ENCODE measurements at regions of chr1 and their contacts with region 1.

Region 1: DNA sequence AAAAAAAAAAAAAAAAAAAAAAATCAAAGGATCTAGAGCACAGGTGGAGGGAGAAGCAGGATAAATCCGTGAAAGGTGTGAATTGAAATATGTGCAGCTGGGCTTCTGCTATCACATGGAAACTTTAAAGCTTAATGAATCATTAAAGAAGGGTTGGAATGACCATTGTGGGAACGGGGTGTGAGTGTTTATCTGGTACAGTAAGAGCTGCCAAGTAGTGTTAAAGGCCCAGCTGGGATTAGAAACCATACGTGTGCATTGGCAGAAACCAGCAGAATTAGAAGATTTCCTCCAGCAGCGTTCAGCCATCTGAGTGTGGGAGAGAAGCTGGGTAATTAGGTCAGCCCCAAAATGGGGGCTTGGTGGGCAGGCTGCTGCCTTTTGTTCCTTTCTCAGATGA is 13.5 kb downstream of the FALEC start:
- DNase-seq: no peak
- H3K4me3 ChIP-seq: no peak overlapping the region
- CTCF ChIP-seq: no peak

Region 2: DNA sequence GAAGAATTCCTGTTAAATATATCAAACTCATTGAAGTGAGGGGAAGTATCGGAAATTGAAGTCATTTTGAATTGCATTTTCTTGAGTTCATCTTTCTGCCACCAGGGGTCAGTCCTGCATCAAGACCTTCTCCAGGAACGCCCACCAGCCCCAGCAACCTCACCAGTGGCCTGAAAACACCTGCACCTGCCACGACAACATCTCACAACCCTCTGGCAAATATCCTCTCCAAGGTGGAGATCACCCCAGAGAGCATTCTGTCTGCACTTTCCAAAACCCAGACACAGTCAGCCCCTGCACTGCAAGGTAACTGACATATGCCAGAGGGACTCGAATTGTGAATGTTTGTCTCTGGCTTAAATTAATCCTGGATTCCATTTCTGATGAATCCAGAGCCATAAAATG is 64.6 kb before region 1 on chr1:
- CTCF ChIA-PET with region 1: interaction called, 15 read pairs
- POLR2A ChIA-PET with region 1: no interaction called
- DNase-seq: no peak
- H3K4me3 ChIP-seq: no peak overlapping the region
- CTCF ChIP-seq: peak; percentile 71

Region 3: GRCh38 chr1:150486964-150487762 is 41.9 kb before region 1 on chr1 and contains the start of gene TARS2:
- CTCF ChIA-PET with region 1: interaction called, 28 read pairs
- POLR2A ChIA-PET with region 1: no interaction called
- DNase-seq: peak; percentile 91
- H3K4me3 ChIP-seq: peak within 1 kb of the TSS; percentile 86
- CTCF ChIP-seq: no peak

Region 4: GRCh38 chr1:150507905-150508854 is 20.8 kb before region 1 on chr1 and contains the start of gene ECM1:
- CTCF ChIA-PET with region 1: interaction called, 160 read pairs
- POLR2A ChIA-PET with region 1: interaction called, 10 read pairs
- DNase-seq: no peak
- H3K4me3 ChIP-seq: peak within 1 kb of the TSS; percentile 64
- CTCF ChIP-seq: no peak